ENCODE measurements at regions of chr13 and their contacts with region 1.

Region 1: GRCh38 chr13:99980201-99980823 is 1.3 kb upstream of the ZIC2 start:
- DNase-seq: no peak
- H3K4me3 ChIP-seq: peak overlapping the region; percentile 73 to 96 (median 94)
- H3K27ac ChIP-seq: peak overlapping the region; percentile 94
- H3K4me1 ChIP-seq: peaks cover 0 to 20% (median 15%) of the 10 kb centered on the region in 4 experiments; a peak in 6 of 7 replicates
- H3K27me3 ChIP-seq: peaks cover 0 to 16% (median 4%) of the 10 kb centered on the region in 4 experiments; a peak in 4 of 7 replicates
- CTCF ChIP-seq: peak in 1 of 3 experiments; percentile 4; a peak in 1 of 4 replicates
- EP300 ChIP-seq: no peak
- POLR2A ChIP-seq: no peak; a peak in 2 of 3 replicates
- RAD21 ChIP-seq: peak in 1 of 2 experiments; percentile 28; a peak in 1 of 4 replicates

Region 2: GRCh38 chr13:99577934-99578917 is 402.1 kb before region 1 on chr13:
- CTCF ChIA-PET with region 1: no interaction called
- POLR2A ChIA-PET with region 1: no interaction called
- DNase-seq: no peak
- H3K4me3 ChIP-seq: no peak overlapping the region
- H3K27ac ChIP-seq: no peak overlapping the region
- H3K4me1 ChIP-seq: no peaks in the 10 kb centered on the region; a peak in 1 of 7 replicates
- H3K27me3 ChIP-seq: no peaks in the 10 kb centered on the region
- CTCF ChIP-seq: peak in 2 of 3 experiments; percentile 25 to 31; a peak in 2 of 4 replicates
- EP300 ChIP-seq: no peak
- POLR2A ChIP-seq: no peak
- RAD21 ChIP-seq: peak; percentile 40 to 52

Region 3: DNA sequence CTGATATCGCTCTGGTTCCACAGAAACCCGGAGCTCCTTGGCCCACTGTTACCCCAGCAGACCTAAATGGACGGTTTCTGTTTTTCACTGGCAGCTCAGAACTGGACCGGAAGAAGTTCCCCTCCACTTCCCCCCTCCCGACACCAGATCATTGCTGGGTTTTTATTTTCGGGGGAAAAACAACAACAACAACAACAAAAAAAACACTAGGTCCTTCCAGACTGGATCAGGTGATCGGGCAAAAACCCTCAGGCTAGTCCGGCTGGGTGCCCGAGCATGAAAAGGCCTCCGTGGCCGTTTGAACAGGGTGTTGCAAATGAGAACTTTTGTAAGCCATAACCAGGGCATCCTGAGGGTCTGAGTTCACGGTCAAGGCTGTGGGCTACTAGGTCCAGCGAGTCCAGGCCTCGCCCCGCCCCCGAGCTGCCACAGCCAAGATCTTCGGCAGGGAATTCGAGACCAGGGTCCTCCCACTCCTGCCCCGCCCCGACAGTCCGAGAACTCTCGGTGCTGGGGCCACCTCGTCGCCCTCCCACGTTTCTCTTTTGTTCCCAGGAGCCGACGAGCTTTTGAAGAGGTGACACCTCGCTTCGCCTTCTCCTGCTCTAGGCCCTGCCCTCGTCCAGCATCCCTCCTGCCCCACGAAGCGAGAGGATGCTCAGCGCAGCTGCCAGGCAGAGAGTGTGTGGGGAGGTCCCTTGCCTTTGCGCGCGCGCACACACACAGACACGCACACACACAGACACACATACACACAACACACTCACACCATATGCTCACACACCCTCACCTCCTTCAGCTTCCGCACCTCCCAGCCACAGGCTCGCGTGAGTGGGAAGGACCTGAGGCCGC is 10.0 kb after region 1 on chr13:
- CTCF ChIA-PET with region 1: interaction called, 3 read pairs
- POLR2A ChIA-PET with region 1: interaction called, 145 read pairs
- DNase-seq: peak in 1 of 2 experiments; percentile 81
- H3K4me3 ChIP-seq: peak overlapping the region; percentile 31 to 72 (median 40)
- H3K27ac ChIP-seq: no peak overlapping the region
- H3K4me1 ChIP-seq: peaks cover 8 to 35% (median 25%) of the 10 kb centered on the region in 4 experiments
- H3K27me3 ChIP-seq: peaks cover 3 to 75% (median 45%) of the 10 kb centered on the region in 4 experiments; a peak in 6 of 7 replicates
- CTCF ChIP-seq: no peak
- EP300 ChIP-seq: no peak
- POLR2A ChIP-seq: no peak
- RAD21 ChIP-seq: no peak

Region 4: DNA sequence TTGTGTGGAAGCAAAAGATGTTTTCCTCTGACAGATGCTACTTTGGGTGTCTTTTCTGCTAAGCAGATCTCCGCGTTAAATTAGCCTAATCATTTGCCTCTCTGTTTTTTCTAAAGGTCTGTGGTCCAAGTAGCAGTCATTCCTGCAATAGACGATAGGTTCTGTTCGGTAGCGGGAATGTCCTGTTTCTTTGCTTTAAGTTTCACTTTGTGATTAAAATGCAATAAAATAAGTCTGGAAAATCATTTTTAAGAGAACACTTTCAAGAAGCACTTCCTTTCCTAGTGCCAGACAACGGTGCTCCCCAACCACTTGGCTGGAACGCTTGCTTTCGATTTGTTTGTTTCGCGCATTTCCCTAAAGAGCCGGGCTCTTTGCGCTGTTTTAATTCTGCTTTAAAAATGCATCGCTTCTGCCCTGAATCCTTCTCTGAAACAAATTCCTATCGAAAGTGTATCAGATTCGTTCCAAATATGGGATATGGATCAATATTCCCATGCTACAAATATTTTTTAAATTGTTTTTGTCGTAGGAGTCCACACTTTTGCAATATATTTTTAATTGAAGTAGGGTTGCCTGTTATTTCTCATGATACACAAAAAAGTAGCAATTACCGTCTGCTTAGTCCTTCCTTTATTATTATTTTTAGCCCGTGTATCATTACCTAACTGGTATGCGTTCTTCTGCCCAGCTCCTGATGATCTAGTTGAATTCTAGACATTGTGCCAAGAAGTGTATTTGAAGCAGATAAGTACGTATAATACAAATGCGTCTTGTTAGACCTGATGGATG is 15.5 kb after region 1 on chr13:
- CTCF ChIA-PET with region 1: interaction called, 3 read pairs
- POLR2A ChIA-PET with region 1: interaction called, 145 read pairs
- DNase-seq: no peak
- H3K4me3 ChIP-seq: peak overlapping the region in 3 of 4 experiments; percentile 5 to 65 (median 26); a peak in 3 of 8 replicates
- H3K27ac ChIP-seq: no peak overlapping the region
- H3K4me1 ChIP-seq: peaks cover 10 to 31% (median 22%) of the 10 kb centered on the region in 4 experiments
- H3K27me3 ChIP-seq: peaks cover 7 to 62% (median 39%) of the 10 kb centered on the region in 4 experiments; a peak in 6 of 7 replicates
- CTCF ChIP-seq: no peak
- EP300 ChIP-seq: no peak
- POLR2A ChIP-seq: no peak
- RAD21 ChIP-seq: no peak